Activated CD4-positive, alpha-beta T cell treated with anti-CD3 and anti-CD28 coated beads, Interleukin-2, amount 10 ng/mL, durations not matched to agents 24 days and 14 days (primary cell): ENCODE measurements at regions of chr12 and their contacts with region 1.

Region 1: DNA sequence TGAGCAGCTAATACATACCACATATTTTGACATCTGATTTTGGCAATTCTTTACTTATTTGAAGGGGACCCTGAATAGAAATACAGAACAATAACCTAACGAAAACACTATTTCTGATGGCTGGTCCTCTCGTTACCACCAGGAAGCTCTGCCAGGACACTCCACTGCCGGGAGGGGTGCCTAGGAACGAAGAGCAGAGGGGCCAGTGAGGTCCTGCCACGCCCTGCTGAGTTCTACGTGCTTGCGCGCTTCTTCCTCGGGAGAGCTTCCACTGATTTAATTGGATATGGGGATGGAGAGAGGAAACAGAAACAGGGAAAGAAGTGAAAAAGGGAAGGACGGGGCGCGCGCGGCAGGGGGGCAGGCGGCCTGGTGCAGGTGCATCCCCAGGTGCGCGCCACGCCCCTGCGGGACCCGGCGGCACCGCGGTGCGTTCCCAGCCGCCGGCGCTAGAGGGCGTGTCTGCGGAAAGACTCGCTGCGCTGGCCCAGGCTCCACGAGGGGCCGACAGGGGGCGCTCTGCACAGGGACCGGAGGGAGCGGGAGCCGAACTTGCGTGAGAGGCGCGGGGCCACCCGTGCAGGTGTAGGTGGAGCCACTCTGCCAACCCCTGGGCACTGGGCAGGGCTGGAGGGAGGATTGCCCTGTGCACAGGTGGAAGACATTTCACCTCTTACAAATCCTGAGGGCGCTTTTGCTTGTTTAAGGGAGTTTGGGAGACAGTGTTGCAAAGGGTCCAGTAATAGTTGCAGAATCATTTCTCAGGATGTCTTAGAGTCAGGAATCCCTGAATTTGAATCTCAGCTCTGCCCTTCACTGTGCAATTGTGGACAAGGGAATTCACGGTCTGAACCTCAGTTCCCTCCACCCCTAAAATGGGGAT is 986.3 kb upstream of the TMEM132C start:
- DNase-seq: peak; percentile 93
- H3K4me3 Mint-ChIP-seq: no peak overlapping the region
- H3K27ac Mint-ChIP-seq: no peak overlapping the region
- H3K4me1 Mint-ChIP-seq: peaks cover 9% of the 10 kb centered on the region
- H3K27me3 Mint-ChIP-seq: no peaks in the 10 kb centered on the region

Region 2: DNA sequence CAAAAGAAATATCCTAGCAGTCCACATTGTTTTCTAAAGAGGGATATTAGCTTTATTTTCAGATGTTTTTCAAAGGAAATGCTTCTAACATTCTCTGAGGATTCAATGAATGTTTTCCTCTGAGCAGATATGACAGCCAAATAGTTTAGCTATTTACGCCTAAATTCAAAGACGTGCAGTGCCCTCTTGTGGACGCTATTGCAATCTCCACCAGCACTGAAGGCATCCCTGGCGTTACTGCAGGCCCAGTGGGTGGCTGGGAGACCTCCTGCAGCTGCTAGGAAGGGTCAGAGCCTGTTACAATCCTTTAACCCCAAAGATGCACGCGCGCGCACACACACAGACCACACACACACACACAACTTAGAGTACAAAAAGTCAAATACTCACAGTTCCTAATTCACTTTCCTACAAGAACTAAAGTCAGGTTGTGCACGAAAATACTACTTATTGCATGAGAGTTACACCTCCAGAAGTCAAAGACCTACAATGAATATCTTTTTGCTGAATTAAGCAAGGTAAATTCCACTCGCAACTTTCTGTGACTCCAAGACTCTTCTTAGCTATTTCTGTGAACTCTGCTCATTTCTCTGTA is 397.0 kb after region 1 on chr12:
- intact Hi-C with region 1: loop called (anchors 2 kb)
- DNase-seq: peak; percentile 87
- H3K4me3 Mint-ChIP-seq: no peak overlapping the region
- H3K27ac Mint-ChIP-seq: no peak overlapping the region
- H3K4me1 Mint-ChIP-seq: no peaks in the 10 kb centered on the region
- H3K27me3 Mint-ChIP-seq: no peaks in the 10 kb centered on the region